GM12878 (cell line): ENCODE measurements at regions of chr6 and their contacts with region 1.

Region 1: GRCh38 chr6:118565311-118565960 is 17.3 kb downstream of the PLN start:
- DNase-seq: peak; percentile 65
- ATAC-seq: peak; percentile 100
- H3K4me3 ChIP-seq: no peak overlapping the region
- H3K27ac ChIP-seq: no peak overlapping the region
- H3K4me1 ChIP-seq: peaks cover 2% of the 10 kb centered on the region; the same call in 1 of the 2 replicates
- H3K27me3 ChIP-seq: no peaks in the 10 kb centered on the region
- CTCF ChIP-seq: peak; percentile 68 to 91 (median 80)
- EP300 ChIP-seq: no peak
- POLR2A ChIP-seq: no peak
- RAD21 ChIP-seq: peak; percentile 95

Region 2: GRCh38 chr6:118551063-118552053 is 14.1 kb before region 1 on chr6:
- CTCF ChIA-PET with region 1: interaction called, 15 read pairs
- POLR2A ChIA-PET with region 1: no interaction called
- RAD21 ChIA-PET with region 1: interaction called, 5 read pairs
- SMC1A ChIA-PET with region 1: interaction called, 10 read pairs
- in situ Hi-C with region 1: no loop called
- intact Hi-C with region 1: no loop called
- DNase-seq: no peak
- ATAC-seq: peak; percentile 93
- H3K4me3 ChIP-seq: no peak overlapping the region
- H3K27ac ChIP-seq: no peak overlapping the region
- H3K4me1 ChIP-seq: no peaks in the 10 kb centered on the region
- H3K27me3 ChIP-seq: no peaks in the 10 kb centered on the region
- CTCF ChIP-seq: peak; percentile 49 to 72 (median 52); a peak in 5 of 6 replicates
- EP300 ChIP-seq: no peak
- POLR2A ChIP-seq: no peak
- RAD21 ChIP-seq: peak; percentile 85

Region 3: DNA sequence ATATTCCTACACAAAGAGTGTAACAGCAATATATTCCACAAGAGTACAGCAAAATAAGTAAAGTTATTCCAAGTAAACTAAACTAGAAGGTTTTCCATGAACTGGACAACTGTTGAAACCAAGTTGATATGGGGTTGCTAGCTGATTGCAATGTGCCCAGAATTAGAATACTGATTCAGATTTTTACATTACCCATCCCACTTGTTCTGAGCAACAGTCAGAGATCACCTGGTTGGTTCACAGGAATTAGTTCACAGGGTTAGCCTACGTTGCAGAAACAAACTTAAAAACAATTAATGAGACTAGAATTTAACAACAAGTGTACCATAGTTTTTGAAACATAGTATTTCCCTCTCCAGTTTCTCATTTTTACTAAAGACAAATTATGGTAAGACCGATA is 36.9 kb after region 1 on chr6:
- CTCF ChIA-PET with region 1: interaction called, 16 read pairs
- POLR2A ChIA-PET with region 1: no interaction called
- RAD21 ChIA-PET with region 1: interaction called, 3 read pairs
- SMC1A ChIA-PET with region 1: interaction called, 12 read pairs
- in situ Hi-C with region 1: no loop called
- intact Hi-C with region 1: no loop called
- DNase-seq: no peak
- ATAC-seq: no peak
- H3K4me3 ChIP-seq: no peak overlapping the region
- H3K27ac ChIP-seq: no peak overlapping the region
- H3K4me1 ChIP-seq: no peaks in the 10 kb centered on the region; the same call in 1 of the 2 replicates
- H3K27me3 ChIP-seq: no peaks in the 10 kb centered on the region
- CTCF ChIP-seq: no peak
- EP300 ChIP-seq: no peak
- POLR2A ChIP-seq: no peak
- RAD21 ChIP-seq: no peak

Region 4: GRCh38 chr6:118709859-118710350 is 144.5 kb after region 1 on chr6:
- CTCF ChIA-PET with region 1: interaction called, 30 read pairs
- POLR2A ChIA-PET with region 1: no interaction called
- RAD21 ChIA-PET with region 1: interaction called, 13 read pairs
- SMC1A ChIA-PET with region 1: interaction called, 13 read pairs
- in situ Hi-C with region 1: no loop called
- intact Hi-C with region 1: no loop called
- DNase-seq: peak; percentile 85
- ATAC-seq: peak; percentile 89
- H3K4me3 ChIP-seq: peak overlapping the region; percentile 81
- H3K27ac ChIP-seq: peak overlapping the region; percentile 84
- H3K4me1 ChIP-seq: peaks cover 33% of the 10 kb centered on the region
- H3K27me3 ChIP-seq: no peaks in the 10 kb centered on the region
- CTCF ChIP-seq: no peak
- EP300 ChIP-seq: no peak
- POLR2A ChIP-seq: peak; percentile 61
- RAD21 ChIP-seq: no peak

Region 5: GRCh38 chr6:118787724-118788423 is 222.4 kb after region 1 on chr6:
- CTCF ChIA-PET with region 1: interaction called, 15 read pairs
- POLR2A ChIA-PET with region 1: no interaction called
- RAD21 ChIA-PET with region 1: interaction called, 5 read pairs
- SMC1A ChIA-PET with region 1: no interaction called
- in situ Hi-C with region 1: no loop called
- intact Hi-C with region 1: no loop called
- DNase-seq: no peak
- ATAC-seq: no peak
- H3K4me3 ChIP-seq: no peak overlapping the region
- H3K27ac ChIP-seq: no peak overlapping the region
- H3K4me1 ChIP-seq: no peaks in the 10 kb centered on the region
- H3K27me3 ChIP-seq: no peaks in the 10 kb centered on the region
- CTCF ChIP-seq: no peak
- EP300 ChIP-seq: no peak
- POLR2A ChIP-seq: no peak
- RAD21 ChIP-seq: no peak

Region 6: DNA sequence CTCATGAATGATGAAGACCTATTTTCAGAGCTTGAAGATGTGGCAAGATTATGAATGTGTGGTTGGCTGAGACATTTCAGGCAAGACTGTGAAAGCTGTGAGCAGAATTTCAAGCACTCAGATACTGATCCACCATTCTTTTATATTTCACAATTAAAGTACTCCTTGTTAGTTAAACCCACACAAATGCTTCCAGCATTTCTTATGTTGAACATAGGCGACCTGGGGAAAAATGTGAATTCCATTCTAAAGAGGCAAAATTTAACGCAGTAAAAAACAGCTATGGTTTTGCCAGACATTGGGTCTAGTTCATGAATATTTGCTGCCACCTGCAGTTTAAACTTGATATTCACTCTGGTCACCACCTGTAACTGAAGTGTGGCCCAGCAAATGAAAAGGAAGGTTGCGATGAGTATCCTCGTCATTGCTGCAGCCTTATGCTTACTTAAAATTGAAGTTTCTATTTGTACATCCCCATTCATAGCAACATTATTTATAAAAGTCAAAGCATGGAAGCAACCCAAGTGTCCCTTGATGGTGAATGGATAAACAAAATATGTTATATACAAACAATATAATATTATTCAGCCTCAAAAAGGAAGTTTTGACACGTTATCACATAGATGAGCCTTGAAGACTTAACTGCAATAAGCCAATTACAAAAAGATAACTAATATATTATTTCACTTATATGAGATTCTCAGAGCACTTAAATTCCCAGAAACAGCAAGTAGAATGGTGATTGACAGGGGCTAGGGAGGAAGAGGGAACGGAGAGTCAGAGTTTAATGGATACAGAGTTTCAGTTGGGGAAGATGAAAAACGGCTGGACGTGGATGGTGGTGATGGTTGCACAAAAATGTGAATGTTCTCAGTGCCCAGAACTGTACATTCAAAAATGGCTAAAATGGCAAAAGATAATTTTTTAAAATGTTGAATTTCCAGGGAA is 545.4 kb after region 1 on chr6:
- CTCF ChIA-PET with region 1: interaction called, 26 read pairs
- POLR2A ChIA-PET with region 1: no interaction called
- RAD21 ChIA-PET with region 1: interaction called, 21 read pairs
- SMC1A ChIA-PET with region 1: interaction called, 21 read pairs
- in situ Hi-C with region 1: no loop called
- intact Hi-C with region 1: loop called (anchors 1 kb)
- DNase-seq: peak; percentile 28
- ATAC-seq: peak; percentile 93
- H3K4me3 ChIP-seq: no peak overlapping the region
- H3K27ac ChIP-seq: no peak overlapping the region
- H3K4me1 ChIP-seq: no peaks in the 10 kb centered on the region
- H3K27me3 ChIP-seq: no peaks in the 10 kb centered on the region
- CTCF ChIP-seq: peak; percentile 42 to 72 (median 53); a peak in 5 of 6 replicates
- EP300 ChIP-seq: no peak
- POLR2A ChIP-seq: no peak
- RAD21 ChIP-seq: peak; percentile 81

Region 7: GRCh38 chr6:119284861-119285521 is 719.6 kb after region 1 on chr6:
- CTCF ChIA-PET with region 1: no interaction called
- POLR2A ChIA-PET with region 1: no interaction called
- RAD21 ChIA-PET with region 1: no interaction called
- SMC1A ChIA-PET with region 1: no interaction called
- in situ Hi-C with region 1: no loop called
- intact Hi-C with region 1: no loop called
- DNase-seq: no peak
- ATAC-seq: peak; percentile 49; the same call in 2 of the 3 replicates
- H3K4me3 ChIP-seq: no peak overlapping the region
- H3K27ac ChIP-seq: no peak overlapping the region
- H3K4me1 ChIP-seq: no peaks in the 10 kb centered on the region
- H3K27me3 ChIP-seq: no peaks in the 10 kb centered on the region
- CTCF ChIP-seq: peak in 1 of 3 experiments; percentile 28; a peak in 1 of 6 replicates
- EP300 ChIP-seq: no peak
- POLR2A ChIP-seq: no peak
- RAD21 ChIP-seq: no peak